MCF 10A (cell line): ENCODE measurements at regions of chr20 and their contacts with region 1.

Region 1: DNA sequence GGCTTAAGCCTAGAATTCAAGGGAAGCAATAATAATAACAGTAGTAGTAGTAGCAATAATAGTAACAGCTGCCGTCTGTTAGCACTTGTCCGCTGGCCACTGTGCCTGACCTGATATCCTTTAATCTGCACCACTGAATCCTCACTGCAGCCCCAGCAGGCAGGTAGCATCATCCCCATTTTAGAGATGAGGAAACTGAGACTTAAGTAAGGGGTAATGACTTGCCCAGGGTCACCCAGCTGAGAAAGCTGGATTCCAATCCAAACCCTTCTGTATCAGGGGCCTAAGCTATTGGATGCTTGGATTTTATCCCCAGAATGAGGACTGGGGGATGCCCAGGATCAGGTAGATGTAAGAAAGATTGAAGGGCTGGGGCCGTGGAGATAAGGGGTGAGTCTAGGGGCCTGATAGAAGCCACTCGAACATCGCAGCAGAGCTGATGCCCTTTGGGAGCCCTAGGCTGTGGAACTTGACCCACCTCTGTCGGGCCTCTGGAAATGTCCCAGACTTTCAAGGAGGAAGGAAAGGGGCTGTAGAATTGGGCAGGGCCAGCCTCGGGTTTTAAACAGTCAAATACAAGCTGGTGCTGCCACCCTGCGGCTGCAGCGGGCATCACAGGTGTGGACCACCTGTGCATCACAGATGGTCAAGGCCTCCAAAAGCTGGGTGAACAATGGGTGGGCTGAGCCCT is 102.1 kb upstream of the MYL9 start:
- DNase-seq: peak; percentile 61
- H3K4me3 Mint-ChIP-seq: no peak overlapping the region
- H3K27ac Mint-ChIP-seq: no peak overlapping the region
- H3K4me1 Mint-ChIP-seq: no peaks in the 10 kb centered on the region
- H3K27me3 Mint-ChIP-seq: no peaks in the 10 kb centered on the region
- CTCF ChIP-seq: peak; percentile 96

Region 2: DNA sequence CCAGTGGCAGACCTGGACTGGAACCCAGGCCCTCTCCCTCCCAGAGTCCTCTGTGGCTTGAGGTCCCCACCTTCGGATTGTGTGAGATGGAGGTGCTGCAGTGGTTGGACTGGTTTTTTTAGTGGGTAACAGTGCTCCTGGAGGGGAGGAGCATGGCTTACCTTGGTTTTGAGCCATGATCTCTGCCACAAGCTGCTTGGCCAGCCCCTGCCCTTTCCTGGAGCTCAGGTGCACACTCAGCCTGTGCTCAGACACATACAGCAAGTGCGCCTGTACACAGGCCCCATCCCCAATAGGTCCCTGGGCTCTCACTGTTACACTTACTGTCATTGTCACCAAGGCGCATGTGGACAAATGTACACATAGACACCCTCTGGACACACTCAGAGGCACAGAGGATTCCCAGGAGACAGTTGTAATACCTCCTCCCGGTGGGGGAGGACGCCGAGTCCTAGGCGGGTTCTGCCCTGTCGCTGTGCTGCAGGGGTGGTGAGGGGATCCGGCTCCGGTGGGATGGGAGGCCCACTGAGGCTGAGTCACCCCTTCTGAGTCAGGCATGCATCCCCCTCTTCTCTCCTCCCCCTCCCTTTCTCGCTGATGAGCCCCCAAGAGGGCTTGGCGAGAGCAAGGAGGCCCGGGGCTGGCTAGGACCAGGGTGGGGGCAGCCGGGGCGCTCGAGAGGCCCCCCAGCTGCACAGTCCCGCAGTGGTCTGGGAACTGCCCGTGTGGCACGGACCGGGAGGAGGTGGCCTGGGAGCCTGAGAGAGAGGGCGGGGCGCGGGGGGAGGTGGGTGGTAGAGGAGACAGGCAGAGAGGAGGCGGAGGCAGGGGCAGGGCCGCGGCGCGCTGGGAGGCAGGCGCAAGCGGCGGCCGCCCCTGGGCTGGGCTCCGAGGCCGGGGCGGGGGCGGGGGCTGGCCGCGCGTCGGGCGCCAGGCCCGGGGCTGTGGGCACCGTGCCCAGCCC is 285.2 kb before region 1 on chr20:
- CTCF ChIA-PET with region 1: interaction called, 13 read pairs
- POLR2A ChIA-PET with region 1: no interaction called
- intact Hi-C with region 1: loop called (anchors 2 kb)
- DNase-seq: peak; percentile 70
- H3K4me3 Mint-ChIP-seq: peak overlapping the region; percentile 58
- H3K27ac Mint-ChIP-seq: no peak overlapping the region
- H3K4me1 Mint-ChIP-seq: no peaks in the 10 kb centered on the region
- H3K27me3 Mint-ChIP-seq: no peaks in the 10 kb centered on the region
- CTCF ChIP-seq: no peak

Region 3: DNA sequence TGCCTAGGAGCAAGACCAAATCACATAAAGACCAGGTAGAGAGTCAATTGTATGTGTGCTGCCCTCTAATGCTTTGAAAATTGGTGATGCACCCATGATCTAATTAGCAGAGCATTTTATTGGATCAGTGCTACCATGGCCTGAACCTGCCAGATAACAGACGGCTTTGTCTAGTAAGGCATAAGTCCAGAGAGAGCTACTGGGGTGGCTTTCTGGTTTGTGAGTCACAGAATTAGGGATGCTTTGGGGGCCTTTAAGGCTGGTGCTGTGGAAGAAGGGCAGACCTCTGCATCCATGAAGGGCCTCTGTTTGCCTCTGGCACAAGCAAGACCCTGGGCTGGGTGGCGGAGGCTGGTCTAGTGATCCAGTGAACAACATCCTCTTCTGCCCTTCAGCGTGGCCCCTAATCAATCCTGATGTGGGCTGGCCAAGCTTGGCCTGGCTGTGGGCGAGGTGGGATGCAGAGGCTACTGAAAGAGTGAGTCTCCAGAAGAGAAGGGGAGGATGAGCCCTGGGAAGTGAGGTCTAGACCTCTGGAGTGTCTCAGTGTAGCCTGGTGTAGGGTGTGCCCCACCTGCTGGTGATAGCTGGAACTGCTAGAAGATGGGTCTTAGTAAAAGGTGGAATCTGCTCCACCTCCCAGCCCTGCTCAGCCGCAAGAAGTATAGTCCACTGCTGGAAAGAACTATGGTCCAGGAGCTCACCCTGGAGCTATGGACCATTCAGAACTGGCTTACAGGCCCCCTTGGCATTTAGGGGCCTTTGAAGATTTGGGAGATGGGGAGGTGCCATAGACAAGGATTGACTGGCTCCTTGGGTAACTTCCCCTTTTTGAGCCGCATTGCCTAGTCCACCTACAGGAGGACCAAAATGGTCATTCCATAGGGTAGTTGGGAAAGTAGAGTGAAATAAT is 239.6 kb before region 1 on chr20:
- CTCF ChIA-PET with region 1: interaction called, 196 read pairs
- POLR2A ChIA-PET with region 1: interaction called, 7 read pairs
- intact Hi-C with region 1: loop called (anchors 1 kb)
- DNase-seq: peak; percentile 78
- H3K4me3 Mint-ChIP-seq: no peak overlapping the region
- H3K27ac Mint-ChIP-seq: no peak overlapping the region
- H3K4me1 Mint-ChIP-seq: no peaks in the 10 kb centered on the region
- H3K27me3 Mint-ChIP-seq: no peaks in the 10 kb centered on the region
- CTCF ChIP-seq: peak; percentile 84

Region 4: GRCh38 chr20:36225666-36226065 is 213.5 kb before region 1 on chr20:
- CTCF ChIA-PET with region 1: interaction called, 11 read pairs
- POLR2A ChIA-PET with region 1: no interaction called
- intact Hi-C with region 1: no loop called
- DNase-seq: no peak
- H3K4me3 Mint-ChIP-seq: no peak overlapping the region
- H3K27ac Mint-ChIP-seq: no peak overlapping the region
- H3K4me1 Mint-ChIP-seq: no peaks in the 10 kb centered on the region
- H3K27me3 Mint-ChIP-seq: no peaks in the 10 kb centered on the region
- CTCF ChIP-seq: no peak

Region 5: DNA sequence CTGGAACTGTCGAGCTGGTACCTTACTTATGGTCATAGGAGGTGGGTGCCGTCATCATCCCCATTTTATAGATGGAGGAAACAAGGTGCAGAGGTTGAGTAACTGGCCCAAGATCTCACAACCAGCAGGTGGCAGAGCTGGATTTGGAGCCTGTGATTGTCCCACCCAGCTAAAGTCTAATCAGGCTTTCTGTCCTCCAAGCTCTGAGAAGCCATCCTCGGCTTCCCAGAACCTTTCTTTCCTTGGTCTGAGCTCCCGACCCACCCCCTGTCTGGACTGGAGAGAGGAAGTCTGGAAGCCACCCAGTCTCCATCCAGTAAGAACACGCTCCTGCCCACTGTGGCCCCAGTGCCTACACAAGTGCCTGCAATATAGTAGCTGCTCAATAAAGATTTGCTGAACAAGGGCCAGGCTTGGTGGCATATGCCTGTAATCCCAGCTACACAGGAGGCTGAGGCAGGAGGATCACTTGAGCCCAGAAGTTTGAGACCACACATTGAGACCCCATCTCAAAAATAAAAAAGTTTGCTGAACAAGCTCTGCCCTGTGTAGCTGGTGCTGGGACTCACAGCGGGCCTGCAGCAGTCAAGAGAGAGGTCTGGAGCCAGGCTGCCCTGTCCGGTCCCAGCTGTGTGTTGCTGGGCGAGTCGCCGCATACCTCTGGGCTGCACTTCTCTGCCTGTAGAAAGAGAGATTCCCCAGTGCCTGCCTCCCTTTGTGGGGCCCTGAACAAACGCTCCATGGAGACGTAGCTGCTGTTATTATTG is 165.6 kb before region 1 on chr20:
- CTCF ChIA-PET with region 1: interaction called, 45 read pairs
- POLR2A ChIA-PET with region 1: no interaction called
- intact Hi-C with region 1: no loop called
- DNase-seq: peak; percentile 39
- H3K4me3 Mint-ChIP-seq: no peak overlapping the region
- H3K27ac Mint-ChIP-seq: no peak overlapping the region
- H3K4me1 Mint-ChIP-seq: no peaks in the 10 kb centered on the region
- H3K27me3 Mint-ChIP-seq: peaks cover 37% of the 10 kb centered on the region
- CTCF ChIP-seq: peak; percentile 24

Region 6: DNA sequence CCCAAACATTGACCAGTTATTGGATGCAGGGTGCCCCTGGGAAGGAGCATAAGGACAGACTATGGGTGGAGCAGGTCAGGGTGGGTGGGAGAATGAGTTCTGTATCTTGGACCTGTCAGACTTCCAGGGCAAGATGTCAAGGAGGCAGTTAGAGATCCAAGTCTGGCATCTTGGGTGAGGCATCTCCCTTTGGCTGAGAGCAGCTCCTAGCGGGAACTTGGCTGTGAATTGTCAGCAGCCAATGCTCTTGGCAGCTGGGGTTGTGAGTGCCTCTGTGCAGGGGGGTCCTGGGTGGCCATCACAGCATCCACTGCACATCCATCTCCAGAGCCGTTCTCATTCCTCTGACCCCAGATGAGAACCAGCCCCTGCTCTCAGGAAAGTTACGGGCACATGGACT is 14.9 kb before region 1 on chr20:
- CTCF ChIA-PET with region 1: interaction called, 10 read pairs
- POLR2A ChIA-PET with region 1: no interaction called
- intact Hi-C with region 1: no loop called
- DNase-seq: no peak
- H3K4me3 Mint-ChIP-seq: no peak overlapping the region
- H3K27ac Mint-ChIP-seq: no peak overlapping the region
- H3K4me1 Mint-ChIP-seq: peaks cover 5% of the 10 kb centered on the region
- H3K27me3 Mint-ChIP-seq: peaks cover 83% of the 10 kb centered on the region
- CTCF ChIP-seq: no peak

Region 7: DNA sequence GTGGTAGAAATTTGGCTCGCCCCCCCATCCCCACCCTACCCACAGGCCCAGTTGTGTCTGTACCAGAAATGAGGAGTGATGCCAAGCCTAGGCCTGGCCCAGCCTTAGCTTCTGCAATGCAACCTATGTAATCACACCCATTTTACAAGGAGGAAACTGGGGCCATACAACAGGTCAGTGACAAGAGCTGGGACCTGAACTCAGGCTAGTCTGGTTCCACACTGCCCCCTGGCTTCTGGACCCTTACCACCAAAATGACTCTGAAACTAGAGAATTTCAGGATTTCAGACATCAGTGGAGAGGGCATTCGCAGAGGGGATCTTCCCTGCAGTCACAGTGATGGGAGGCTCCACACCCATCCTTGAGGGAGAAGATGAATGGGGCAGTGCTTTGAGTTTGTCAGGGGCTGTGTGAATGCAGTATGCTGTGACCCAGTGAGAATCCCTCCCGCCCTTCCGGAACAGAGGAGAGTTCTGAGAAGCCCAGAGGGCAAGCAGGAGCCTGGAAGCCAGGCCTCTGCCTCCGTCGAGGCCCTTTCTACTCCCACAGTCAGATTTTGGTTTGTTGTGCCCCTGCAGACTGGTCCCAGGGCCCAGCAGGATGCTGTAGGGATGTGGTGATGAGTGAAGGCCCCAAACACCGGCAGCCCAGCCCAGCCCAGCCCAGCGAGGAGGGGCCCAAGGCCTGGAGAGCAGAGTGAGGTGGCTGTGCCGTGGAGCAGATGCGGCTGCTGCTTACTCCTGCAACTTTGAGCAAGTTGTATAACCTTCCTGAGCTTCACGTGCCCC is 54.0 kb after region 1 on chr20:
- CTCF ChIA-PET with region 1: no interaction called
- POLR2A ChIA-PET with region 1: no interaction called
- intact Hi-C with region 1: no loop called
- DNase-seq: no peak
- H3K4me3 Mint-ChIP-seq: no peak overlapping the region
- H3K27ac Mint-ChIP-seq: peak overlapping the region; percentile 55
- H3K4me1 Mint-ChIP-seq: peaks cover 39% of the 10 kb centered on the region
- H3K27me3 Mint-ChIP-seq: no peaks in the 10 kb centered on the region
- CTCF ChIP-seq: peak; percentile 20

Region 8: DNA sequence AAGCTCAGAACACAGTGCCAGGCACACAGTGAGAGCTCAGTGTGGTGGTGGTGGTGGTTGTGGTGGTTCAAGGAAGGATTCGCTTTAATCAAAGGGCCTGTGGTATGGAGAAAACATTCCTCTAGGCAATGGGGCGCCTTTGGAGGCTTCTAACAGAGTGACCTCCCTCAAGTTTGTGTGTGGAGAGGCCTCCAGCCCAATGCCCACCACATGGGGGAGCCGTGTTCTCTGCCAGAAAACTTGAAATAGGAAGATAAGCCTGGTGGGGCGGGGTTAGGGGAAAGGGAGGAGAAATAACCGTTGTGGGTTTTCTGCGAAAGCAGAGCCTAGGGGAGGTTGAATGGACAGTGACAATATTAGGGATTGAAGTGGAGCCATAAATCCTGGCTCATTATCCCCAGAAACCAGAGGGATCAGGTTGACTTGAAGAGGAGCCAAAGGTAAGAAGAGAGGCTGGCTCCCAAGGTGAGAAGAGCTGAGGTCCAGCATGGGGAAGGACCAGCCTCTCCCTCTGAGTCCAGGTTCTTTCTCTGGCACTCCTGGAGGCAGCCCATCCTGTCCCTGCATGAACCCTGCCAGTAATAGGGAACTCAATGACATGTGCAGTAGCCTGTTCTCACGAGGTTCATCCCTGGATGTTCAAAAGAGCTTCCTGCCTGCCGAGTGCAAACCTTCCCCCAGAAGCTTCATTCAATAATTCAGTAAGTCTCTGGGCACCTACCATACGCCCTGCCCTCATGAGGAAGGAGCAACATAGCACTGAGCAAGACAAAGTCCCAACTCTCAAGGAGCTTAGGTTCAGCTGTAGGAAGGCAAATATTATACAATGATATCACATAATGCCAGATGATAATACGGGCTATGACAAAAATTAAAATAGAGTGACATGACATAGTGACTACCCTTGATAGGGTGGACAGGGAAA is 1674.5 kb after region 1 on chr20:
- CTCF ChIA-PET with region 1: no interaction called
- POLR2A ChIA-PET with region 1: no interaction called
- intact Hi-C with region 1: no loop called
- DNase-seq: peak; percentile 54
- H3K4me3 Mint-ChIP-seq: no peak overlapping the region
- H3K27ac Mint-ChIP-seq: no peak overlapping the region
- H3K4me1 Mint-ChIP-seq: peaks cover 41% of the 10 kb centered on the region
- H3K27me3 Mint-ChIP-seq: no peaks in the 10 kb centered on the region
- CTCF ChIP-seq: no peak